CD4-positive, alpha-beta memory T cell (primary cell): ENCODE measurements at regions of chr5 and their contacts with region 1.

Region 1: DNA sequence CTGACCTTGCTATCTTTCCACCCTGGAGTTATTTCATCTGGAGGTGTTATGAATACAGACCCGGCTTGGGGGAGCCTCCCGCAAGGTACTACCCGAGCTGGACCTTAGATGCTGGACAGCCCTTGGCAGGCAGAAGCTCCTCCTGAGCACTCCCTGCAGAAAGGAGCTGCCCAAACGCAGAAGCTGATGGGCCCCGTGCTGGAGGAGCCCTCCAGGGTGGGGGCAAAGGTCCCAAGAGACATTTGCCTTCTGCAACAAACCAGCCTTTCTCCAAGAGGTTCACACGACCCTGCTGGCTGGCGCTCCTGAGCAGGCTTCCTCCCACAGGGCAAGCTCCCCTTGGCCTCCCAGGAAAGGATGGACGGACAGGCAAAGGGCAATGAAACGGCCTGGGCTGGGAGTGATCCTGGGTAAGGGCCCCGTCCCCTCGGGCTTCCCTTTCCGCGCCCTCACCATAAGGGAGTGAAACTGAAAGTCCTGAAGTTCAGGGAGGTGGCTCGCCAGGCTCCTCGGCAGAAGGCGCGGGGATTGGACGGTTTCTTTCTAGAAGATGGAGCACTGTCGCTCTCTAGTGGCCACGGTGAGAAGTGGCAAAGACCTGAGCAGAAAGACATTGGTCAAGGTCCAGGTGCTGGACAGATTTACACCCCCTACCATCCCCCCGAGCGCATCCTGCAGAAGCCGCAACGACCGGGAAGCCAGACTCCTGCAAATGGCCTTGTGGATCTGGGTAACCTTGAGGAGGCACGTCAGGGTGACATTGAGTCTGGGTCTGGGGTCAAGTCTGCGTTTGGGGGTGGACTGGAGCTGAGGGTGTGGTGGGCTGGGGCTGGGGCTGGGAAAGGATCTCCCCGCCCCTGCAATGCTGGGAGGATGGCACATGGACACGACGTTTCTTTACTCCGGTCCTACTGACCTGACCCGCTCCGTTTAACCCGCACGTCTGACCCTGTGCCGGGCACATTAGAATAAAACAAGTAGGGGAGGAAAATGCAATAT is 56.4 kb downstream of the NEURL1B start:
- DNase-seq: peak; percentile 81 to 85 (median 82)
- H3K4me3 ChIP-seq: peak overlapping the region; percentile 75 to 77
- H3K4me3 Mint-ChIP-seq: peak overlapping the region; percentile 93 to 99 (median 96)
- H3K27ac ChIP-seq: peak overlapping the region; percentile 71
- H3K27ac Mint-ChIP-seq: peak overlapping the region; percentile 91 to 98 (median 96)
- H3K4me1 ChIP-seq: peaks cover 24% of the 10 kb centered on the region
- H3K4me1 Mint-ChIP-seq: peaks cover 11 to 27% (median 21%) of the 10 kb centered on the region in 4 donors
- H3K27me3 ChIP-seq: peaks cover 7% of the 10 kb centered on the region
- H3K27me3 Mint-ChIP-seq: peaks cover 14 to 15% of the 10 kb centered on the region in 2 donors

Region 2: DNA sequence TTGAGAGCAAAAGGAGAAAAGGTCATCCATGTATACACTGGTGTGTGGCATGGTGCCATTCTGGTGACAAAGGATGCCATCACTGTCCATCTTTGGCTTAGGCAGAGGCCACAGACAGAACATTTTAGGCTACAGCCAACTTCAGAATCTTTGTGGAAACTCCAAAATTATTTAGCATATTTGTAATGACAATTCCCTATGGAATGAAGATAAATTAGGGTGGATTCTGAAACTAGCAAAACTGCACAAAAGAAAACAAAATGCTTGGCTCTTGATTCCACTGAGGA is 783.5 kb before region 1 on chr5:
- CTCF ChIA-PET with region 1: no interaction called
- POLR2A ChIA-PET with region 1: no interaction called
- intact Hi-C with region 1: loop called (anchors 5 kb)
- DNase-seq: no peak
- H3K4me3 ChIP-seq: no peak overlapping the region
- H3K4me3 Mint-ChIP-seq: peak overlapping the region in 2 of 8 donors; percentile 10 to 41
- H3K27ac ChIP-seq: no peak overlapping the region
- H3K27ac Mint-ChIP-seq: peak overlapping the region in 5 of 7 donors; percentile 2 to 88 (median 60)
- H3K4me1 ChIP-seq: peaks cover 24% of the 10 kb centered on the region
- H3K4me1 Mint-ChIP-seq: peaks cover 34 to 57% (median 41%) of the 10 kb centered on the region in 4 donors
- H3K27me3 ChIP-seq: no peaks in the 10 kb centered on the region
- H3K27me3 Mint-ChIP-seq: no peaks in the 10 kb centered on the region

Region 3: GRCh38 chr5:172450861-172451695 is 246.3 kb before region 1 on chr5:
- CTCF ChIA-PET with region 1: interaction called, 11 read pairs
- POLR2A ChIA-PET with region 1: no interaction called
- intact Hi-C with region 1: no loop called
- DNase-seq: peak in 4 of 5 donors; percentile 18 to 28 (median 22)
- H3K4me3 ChIP-seq: no peak overlapping the region
- H3K4me3 Mint-ChIP-seq: peak overlapping the region in 3 of 8 donors; percentile 13 to 59 (median 47)
- H3K27ac ChIP-seq: no peak overlapping the region
- H3K27ac Mint-ChIP-seq: no peak overlapping the region
- H3K4me1 ChIP-seq: peaks cover 11% of the 10 kb centered on the region
- H3K4me1 Mint-ChIP-seq: peaks cover 2 to 20% (median 12%) of the 10 kb centered on the region in 4 donors
- H3K27me3 ChIP-seq: peaks cover 5% of the 10 kb centered on the region
- H3K27me3 Mint-ChIP-seq: peaks cover 26 to 43% of the 10 kb centered on the region in 2 donors

Region 4: GRCh38 chr5:172473427-172473826 is 224.0 kb before region 1 on chr5:
- CTCF ChIA-PET with region 1: interaction called, 52 read pairs
- POLR2A ChIA-PET with region 1: no interaction called
- intact Hi-C with region 1: no loop called
- DNase-seq: no peak
- H3K4me3 ChIP-seq: no peak overlapping the region
- H3K4me3 Mint-ChIP-seq: no peak overlapping the region
- H3K27ac ChIP-seq: no peak overlapping the region
- H3K27ac Mint-ChIP-seq: no peak overlapping the region
- H3K4me1 ChIP-seq: no peaks in the 10 kb centered on the region
- H3K4me1 Mint-ChIP-seq: no peaks in the 10 kb centered on the region
- H3K27me3 ChIP-seq: no peaks in the 10 kb centered on the region
- H3K27me3 Mint-ChIP-seq: peaks cover 7 to 10% of the 10 kb centered on the region in 2 donors

Region 5: GRCh38 chr5:172932313-172933017 is 235.0 kb after region 1 on chr5:
- CTCF ChIA-PET with region 1: interaction called, 19 read pairs
- POLR2A ChIA-PET with region 1: no interaction called
- intact Hi-C with region 1: no loop called
- DNase-seq: peak; percentile 64 to 74 (median 70)
- H3K4me3 ChIP-seq: no peak overlapping the region
- H3K4me3 Mint-ChIP-seq: no peak overlapping the region
- H3K27ac ChIP-seq: no peak overlapping the region
- H3K27ac Mint-ChIP-seq: peak overlapping the region in 5 of 7 donors; percentile 54 to 80 (median 66)
- H3K4me1 ChIP-seq: peaks cover 4% of the 10 kb centered on the region
- H3K4me1 Mint-ChIP-seq: peaks cover 6 to 8% (median 6%) of the 10 kb centered on the region in 4 donors
- H3K27me3 ChIP-seq: no peaks in the 10 kb centered on the region
- H3K27me3 Mint-ChIP-seq: no peaks in the 10 kb centered on the region